WTC11 (cell line): ENCODE measurements at regions of chr1 and their contacts with region 1.

Region 1: DNA sequence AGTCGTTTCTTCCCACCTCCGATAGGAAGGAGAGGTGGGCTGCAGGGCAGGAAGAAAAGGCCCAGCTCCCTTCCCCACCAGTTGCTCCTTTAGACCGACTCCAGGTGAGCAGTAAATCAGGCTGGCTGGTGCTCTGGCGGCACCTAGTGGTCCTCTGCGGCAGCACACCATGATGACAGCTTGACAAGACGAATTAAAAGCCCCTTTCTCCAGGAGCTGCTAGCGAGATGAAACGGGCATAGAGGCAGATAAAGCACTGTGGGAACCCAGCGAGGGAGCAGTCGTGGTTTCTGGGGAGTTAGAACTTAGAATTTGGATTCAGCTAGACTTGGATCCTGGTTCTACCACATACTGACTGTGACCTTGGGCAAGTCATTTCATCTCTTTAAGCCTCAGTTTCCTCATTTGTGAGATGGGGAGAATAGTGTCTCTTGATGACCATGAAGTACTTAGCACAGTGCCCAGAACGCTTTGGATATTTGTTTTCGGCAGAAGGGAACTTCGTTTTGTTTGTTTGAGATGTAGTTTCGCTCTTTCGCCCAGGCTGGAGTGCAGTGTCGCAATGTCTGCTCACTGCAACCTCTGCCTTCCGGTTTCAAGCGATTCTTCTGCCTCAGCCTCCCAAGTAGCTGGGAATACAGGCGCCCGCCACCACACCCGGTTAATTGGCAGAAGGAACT is 21.8 kb upstream of the COL9A2 start:
- DNase-seq: peak; percentile 96
- ATAC-seq: peak; percentile 98
- H3K4me3 Mint-ChIP-seq: no peak overlapping the region
- H3K27ac Mint-ChIP-seq: no peak overlapping the region
- H3K4me1 Mint-ChIP-seq: 0 out of 2 replicates have a peak, but pooled peaks cover 3% of the 10 kb centered on the region
- H3K27me3 Mint-ChIP-seq: peaks cover 37% of the 10 kb centered on the region
- CTCF ChIP-seq: peak; percentile 96

Region 2: DNA sequence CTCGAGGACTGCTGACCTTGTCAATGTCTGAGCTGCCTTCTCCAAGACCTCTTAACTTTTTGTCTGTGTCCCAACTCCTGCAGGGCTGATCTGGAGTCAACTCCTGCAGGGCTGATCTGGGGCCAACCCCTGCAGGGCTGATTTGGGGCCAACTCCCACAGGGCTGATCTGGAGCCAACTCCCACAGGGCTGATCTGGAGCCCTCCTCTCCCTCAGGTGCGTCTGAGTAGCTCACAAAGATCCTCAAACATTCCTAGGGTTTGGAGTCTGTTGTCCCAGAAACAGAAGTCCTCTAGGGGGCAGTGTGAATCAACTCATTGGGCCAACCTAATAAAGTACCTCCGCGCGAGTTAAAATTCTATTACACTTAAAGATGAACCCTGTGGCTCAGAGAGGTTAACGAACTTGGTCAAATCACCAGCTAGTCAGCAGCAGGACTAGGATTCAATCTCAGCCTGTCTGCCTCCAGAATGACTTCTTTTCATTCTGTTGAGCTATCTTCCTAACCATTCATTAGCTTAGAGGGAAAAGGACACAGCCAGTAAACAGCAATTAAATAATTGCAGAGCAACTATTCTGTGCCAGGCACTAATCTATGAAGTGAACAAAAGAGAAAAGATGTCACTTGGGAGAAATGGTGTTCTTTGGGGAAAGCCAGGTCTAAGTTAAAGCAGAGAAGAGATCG is 194.9 kb before region 1 on chr1:
- CTCF ChIA-PET with region 1: interaction called, 127 read pairs
- POLR2A ChIA-PET with region 1: no interaction called
- DNase-seq: peak; percentile 65
- ATAC-seq: peak; percentile 99
- H3K4me3 Mint-ChIP-seq: no peak overlapping the region
- H3K27ac Mint-ChIP-seq: peak overlapping the region; percentile 41; the same call in 1 of the 2 replicates
- H3K4me1 Mint-ChIP-seq: peaks cover 5% of the 10 kb centered on the region
- H3K27me3 Mint-ChIP-seq: peaks cover 39% of the 10 kb centered on the region
- CTCF ChIP-seq: peak; percentile 48; the same call in 1 of the 2 replicates

Region 3: GRCh38 chr1:40185951-40186864 is 152.7 kb before region 1 on chr1:
- CTCF ChIA-PET with region 1: interaction called, 20 read pairs
- POLR2A ChIA-PET with region 1: no interaction called
- DNase-seq: no peak
- ATAC-seq: no peak
- H3K4me3 Mint-ChIP-seq: no peak overlapping the region
- H3K27ac Mint-ChIP-seq: peak overlapping the region; percentile 33
- H3K4me1 Mint-ChIP-seq: peaks cover 15% of the 10 kb centered on the region
- H3K27me3 Mint-ChIP-seq: no peaks in the 10 kb centered on the region
- CTCF ChIP-seq: no peak

Region 4: DNA sequence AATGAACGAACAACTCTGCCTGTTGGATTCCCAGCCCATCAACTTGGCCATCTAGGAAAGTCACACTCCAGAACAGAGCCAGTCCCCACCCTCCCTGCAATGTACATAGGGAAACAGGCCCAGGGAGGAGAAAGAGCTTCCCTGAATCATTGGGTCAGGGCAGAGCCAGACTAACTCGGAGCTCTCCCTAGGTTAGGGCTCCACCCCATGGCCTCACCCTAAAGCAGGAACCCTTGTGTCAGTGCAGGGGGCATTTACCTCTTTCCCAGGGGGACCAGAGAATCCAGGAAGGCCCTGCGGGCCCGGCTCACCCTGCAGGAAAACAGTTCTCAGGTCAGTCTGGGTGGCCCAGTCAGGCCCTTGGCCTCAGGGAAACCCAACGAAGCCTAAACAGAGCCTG is 33.4 kb before region 1 on chr1:
- CTCF ChIA-PET with region 1: interaction called, 20 read pairs
- POLR2A ChIA-PET with region 1: no interaction called
- DNase-seq: peak; percentile 27
- ATAC-seq: peak; percentile 64
- H3K4me3 Mint-ChIP-seq: no peak overlapping the region
- H3K27ac Mint-ChIP-seq: no peak overlapping the region
- H3K4me1 Mint-ChIP-seq: no peaks in the 10 kb centered on the region
- H3K27me3 Mint-ChIP-seq: peaks cover 26% of the 10 kb centered on the region
- CTCF ChIP-seq: no peak

Region 5: DNA sequence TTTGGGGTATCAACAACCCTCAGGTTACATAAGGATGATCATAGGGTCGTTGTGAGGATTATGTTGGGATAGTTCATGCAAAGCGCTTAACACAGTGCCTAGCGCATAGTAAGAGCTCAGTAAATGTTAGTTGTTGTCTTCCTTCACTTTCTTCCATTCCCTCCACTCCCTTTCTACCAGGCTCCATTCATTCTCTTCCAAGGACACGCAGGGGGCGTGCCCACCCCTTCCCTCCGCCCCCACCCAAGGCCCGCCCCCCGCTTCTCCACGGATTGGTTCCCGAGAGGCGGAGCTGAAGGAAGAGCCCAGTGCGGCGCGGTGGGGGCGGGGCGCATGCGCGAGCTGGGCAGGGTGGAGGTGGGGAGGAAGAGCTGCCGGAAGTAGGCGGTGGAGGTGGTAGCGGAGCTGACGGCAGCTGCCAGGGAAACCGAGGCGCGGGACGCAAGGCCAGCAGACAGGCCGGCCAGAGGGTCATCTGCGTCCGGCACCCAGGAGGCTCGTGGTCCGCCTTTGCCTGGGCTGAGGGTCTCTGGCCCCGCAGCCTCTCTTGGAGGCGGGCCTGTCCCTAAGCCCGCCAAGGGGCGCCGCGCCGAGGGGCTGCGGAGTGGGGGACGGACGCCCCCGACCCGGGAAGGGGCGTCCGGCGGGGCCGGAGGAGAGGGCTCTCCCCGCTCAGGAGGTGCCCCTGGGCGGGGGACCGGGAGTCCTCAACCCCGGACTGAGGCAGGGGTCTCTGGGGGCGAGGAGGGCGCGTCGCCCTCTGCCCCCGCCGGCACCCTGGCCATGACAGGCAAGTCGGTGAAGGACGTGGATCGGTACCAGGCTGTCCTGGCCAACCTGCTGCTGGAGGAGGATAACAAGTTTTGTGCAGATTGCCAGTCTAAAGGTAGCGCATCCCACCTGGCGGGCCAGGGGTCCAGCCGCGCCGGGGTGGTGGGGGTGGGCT is 34.7 kb after region 1 on chr1 and contains the start of gene SMAP2:
- CTCF ChIA-PET with region 1: interaction called, 45 read pairs
- POLR2A ChIA-PET with region 1: no interaction called
- DNase-seq: peak; percentile 97
- ATAC-seq: peak; percentile 98
- H3K4me3 Mint-ChIP-seq: peak within 1 kb of the TSS; percentile 89
- H3K27ac Mint-ChIP-seq: peak within 1 kb of the TSS; percentile 23; the same call in 1 of the 2 replicates
- H3K4me1 Mint-ChIP-seq: peaks cover 15% of the 10 kb centered on the region
- H3K27me3 Mint-ChIP-seq: peaks cover 13% of the 10 kb centered on the region
- CTCF ChIP-seq: no peak
- total RNA-seq, gene SMAP2: 4.9 to 5.7 TPM (median 5.7 TPM) in 3 replicates

Region 6: GRCh38 chr1:40438391-40439015 is 99.6 kb after region 1 on chr1:
- CTCF ChIA-PET with region 1: interaction called, 10 read pairs
- POLR2A ChIA-PET with region 1: no interaction called
- DNase-seq: no peak
- ATAC-seq: peak; percentile 77
- H3K4me3 Mint-ChIP-seq: no peak overlapping the region
- H3K27ac Mint-ChIP-seq: no peak overlapping the region
- H3K4me1 Mint-ChIP-seq: no peaks in the 10 kb centered on the region
- H3K27me3 Mint-ChIP-seq: no peaks in the 10 kb centered on the region
- CTCF ChIP-seq: peak; percentile 41